Activated CD4-positive, alpha-beta memory T cell treated with anti-CD3 and anti-CD28 coated beads, Interleukin-2, amount 10 ng/mL, durations not matched to agents 7 days and 5 days (primary cell): ENCODE measurements at regions of chr4 and their contacts with region 1.

Region 1: DNA sequence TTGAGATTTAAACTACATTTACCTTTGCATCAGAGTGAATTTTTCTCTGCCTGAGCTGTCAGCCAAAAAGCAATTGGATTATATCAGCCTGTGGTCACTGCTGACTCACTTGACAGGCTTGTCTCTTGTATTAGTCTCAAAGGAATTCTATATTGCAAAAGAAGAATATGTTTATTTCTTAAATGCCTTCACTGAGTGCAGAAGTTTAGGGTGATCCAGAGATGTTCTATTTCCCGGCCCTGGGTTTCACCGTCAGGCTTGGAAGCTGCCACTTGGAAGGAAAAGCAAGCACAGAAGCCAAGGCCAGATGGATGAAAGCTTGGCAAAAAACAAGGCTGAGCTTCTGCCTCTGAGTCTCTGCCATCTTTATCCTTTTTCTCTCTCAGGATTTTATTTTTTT is 80.9 kb downstream of the FAM114A1 start:
- DNase-seq: no peak
- H3K4me3 Mint-ChIP-seq: no peak overlapping the region
- H3K27ac Mint-ChIP-seq: no peak overlapping the region
- H3K4me1 Mint-ChIP-seq: peaks cover 37% of the 10 kb centered on the region
- H3K27me3 Mint-ChIP-seq: no peaks in the 10 kb centered on the region

Region 2: GRCh38 chr4:38872604-38873006 is 75.9 kb before region 1 on chr4:
- CTCF ChIA-PET with region 1: no interaction called
- POLR2A ChIA-PET with region 1: no interaction called
- DNase-seq: no peak
- H3K4me3 Mint-ChIP-seq: no peak overlapping the region
- H3K27ac Mint-ChIP-seq: no peak overlapping the region
- H3K4me1 Mint-ChIP-seq: peaks cover 12% of the 10 kb centered on the region
- H3K27me3 Mint-ChIP-seq: peaks cover 40% of the 10 kb centered on the region

Region 3: DNA sequence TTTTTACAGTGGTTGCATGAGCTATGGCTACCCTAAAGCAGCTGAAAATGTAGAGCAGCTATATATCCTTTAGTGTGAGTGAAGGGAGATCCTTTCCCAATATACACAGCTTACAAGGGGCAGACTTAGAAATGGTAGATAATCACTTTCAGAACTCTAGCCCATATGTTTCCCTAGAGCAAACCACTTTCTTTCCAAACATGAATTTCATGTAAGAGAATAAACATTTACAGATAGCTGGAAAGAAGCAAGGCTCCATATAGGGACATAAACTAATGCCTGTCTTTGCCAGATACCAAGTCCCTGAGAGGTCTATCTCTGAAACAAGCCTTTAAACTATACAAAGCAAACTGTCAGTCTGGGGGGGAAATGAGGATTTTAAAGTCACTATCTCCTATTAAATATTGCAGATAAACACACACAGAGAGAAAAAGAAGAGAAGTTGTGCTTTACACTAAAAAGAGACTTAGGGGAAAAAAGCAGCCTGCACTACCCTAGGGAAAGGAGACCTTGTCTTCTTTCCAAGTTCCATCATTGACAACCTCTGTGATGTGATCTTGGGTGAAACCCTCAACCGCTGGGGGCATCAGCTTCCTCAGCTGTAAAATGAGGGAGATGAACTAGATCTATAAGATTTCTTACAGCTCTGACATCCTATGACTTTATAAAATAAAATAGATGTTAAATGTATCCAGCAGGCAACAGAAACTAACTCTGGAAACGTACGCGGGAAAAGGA is 10.1 kb after region 1 on chr4:
- CTCF ChIA-PET with region 1: interaction called, 6 read pairs
- POLR2A ChIA-PET with region 1: interaction called, 14 read pairs
- DNase-seq: no peak
- H3K4me3 Mint-ChIP-seq: no peak overlapping the region
- H3K27ac Mint-ChIP-seq: peak overlapping the region; percentile 55
- H3K4me1 Mint-ChIP-seq: peaks cover 25% of the 10 kb centered on the region
- H3K27me3 Mint-ChIP-seq: no peaks in the 10 kb centered on the region

Region 4: GRCh38 chr4:39044364-39044955 is 95.9 kb after region 1 on chr4:
- CTCF ChIA-PET with region 1: interaction called, 4 read pairs
- POLR2A ChIA-PET with region 1: interaction called, 11 read pairs
- DNase-seq: peak; percentile 94
- H3K4me3 Mint-ChIP-seq: peak overlapping the region; percentile 80
- H3K27ac Mint-ChIP-seq: peak overlapping the region; percentile 82
- H3K4me1 Mint-ChIP-seq: peaks cover 56% of the 10 kb centered on the region
- H3K27me3 Mint-ChIP-seq: no peaks in the 10 kb centered on the region